CD14-positive monocyte (primary cell): ENCODE measurements at regions of chr22 and their contacts with region 1.

Region 1: GRCh38 chr22:50498322-50498890 is 9.1 kb downstream of the LMF2 start:
- DNase-seq: peak; percentile 34 to 58 (median 53)
- H3K4me3 ChIP-seq: no peak overlapping the region
- H3K4me3 Mint-ChIP-seq: no peak overlapping the region
- H3K27ac ChIP-seq: no peak overlapping the region
- H3K27ac Mint-ChIP-seq: no peak overlapping the region
- H3K4me1 ChIP-seq: no peaks in the 10 kb centered on the region
- H3K4me1 Mint-ChIP-seq: peaks cover 2% of the 10 kb centered on the region
- H3K27me3 ChIP-seq: no peaks in the 10 kb centered on the region
- H3K27me3 Mint-ChIP-seq: peaks cover 6 to 10% (median 10%) of the 10 kb centered on the region in 3 donors
- CTCF ChIP-seq: peak; percentile 66

Region 2: DNA sequence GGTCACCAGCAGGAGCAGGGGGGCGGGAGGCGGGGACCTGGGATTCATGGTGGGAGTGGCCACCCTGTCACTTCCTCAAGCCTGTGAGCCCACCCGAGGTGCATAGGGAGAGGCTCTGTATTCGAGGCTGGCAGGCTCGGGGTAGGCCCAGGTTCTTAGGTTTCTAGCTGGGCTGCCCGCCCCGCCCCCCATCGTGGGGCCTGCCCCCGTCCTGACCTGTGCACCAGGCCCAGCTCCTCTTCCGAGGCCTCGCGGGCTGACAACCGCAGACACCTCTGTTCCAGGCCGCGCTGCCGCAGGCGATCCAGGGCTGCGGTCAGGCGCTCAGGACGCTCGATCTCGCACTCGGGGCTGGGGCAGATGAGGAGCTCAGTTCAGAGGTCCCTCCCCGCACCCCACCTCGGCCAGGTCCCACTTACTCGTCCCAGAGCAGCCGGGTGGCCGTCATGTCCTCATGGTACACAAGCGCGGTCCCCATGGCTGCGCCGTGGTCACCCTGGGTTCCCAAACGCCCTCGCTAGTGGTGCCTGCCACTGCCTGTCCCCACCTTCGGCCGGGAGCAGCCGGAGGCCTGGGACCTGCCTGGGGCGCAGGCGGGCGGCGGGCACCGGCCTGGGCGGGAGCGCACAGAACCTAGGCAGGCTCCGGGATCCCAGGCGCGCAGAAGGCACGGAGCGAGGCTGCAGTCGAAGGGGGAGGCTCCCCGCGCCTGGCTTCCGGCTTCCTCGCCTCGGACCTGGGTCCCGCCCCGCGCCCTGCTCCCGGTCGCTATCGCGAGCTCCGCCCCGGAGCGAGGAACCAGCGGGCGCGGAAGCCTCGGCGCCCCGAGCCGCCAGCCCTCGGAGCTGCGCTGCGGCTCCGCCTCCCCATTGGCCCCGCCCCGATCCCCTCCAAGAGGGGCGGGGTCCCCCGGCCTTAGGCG is 247.6 kb before region 1 on chr22 and contains the start of gene HDAC10:
- intact Hi-C with region 1: loop called (anchors 5 kb)
- DNase-seq: peak; percentile 66 to 78 (median 68)
- H3K4me3 ChIP-seq: peak within 1 kb of the TSS; percentile 72 to 96 (median 92)
- H3K4me3 Mint-ChIP-seq: peak within 1 kb of the TSS; percentile 83 to 92
- H3K27ac ChIP-seq: peak within 1 kb of the TSS; percentile 52 to 76
- H3K27ac Mint-ChIP-seq: peak within 1 kb of the TSS in 5 of 7 donors; percentile 33 to 82 (median 59)
- H3K4me1 ChIP-seq: peaks cover 33 to 47% of the 10 kb centered on the region in 2 donors
- H3K4me1 Mint-ChIP-seq: peaks cover 23% of the 10 kb centered on the region
- H3K27me3 ChIP-seq: no peaks in the 10 kb centered on the region
- H3K27me3 Mint-ChIP-seq: peaks cover 0 to 2% (median 0%) of the 10 kb centered on the region in 3 donors
- CTCF ChIP-seq: no peak
- polyA plus RNA-seq, gene HDAC10: 9.2 to 148 (median 13.7) TPM

Region 3: GRCh38 chr22:50357776-50358175 is 140.6 kb before region 1 on chr22:
- intact Hi-C with region 1: loop called in 1 of 2 experiments (anchors 10 kb)
- DNase-seq: no peak
- H3K4me3 ChIP-seq: no peak overlapping the region
- H3K4me3 Mint-ChIP-seq: no peak overlapping the region
- H3K27ac ChIP-seq: no peak overlapping the region
- H3K27ac Mint-ChIP-seq: no peak overlapping the region
- H3K4me1 ChIP-seq: no peaks in the 10 kb centered on the region
- H3K4me1 Mint-ChIP-seq: peaks cover 4% of the 10 kb centered on the region
- H3K27me3 ChIP-seq: no peaks in the 10 kb centered on the region
- H3K27me3 Mint-ChIP-seq: no peaks in the 10 kb centered on the region
- CTCF ChIP-seq: no peak

Region 4: DNA sequence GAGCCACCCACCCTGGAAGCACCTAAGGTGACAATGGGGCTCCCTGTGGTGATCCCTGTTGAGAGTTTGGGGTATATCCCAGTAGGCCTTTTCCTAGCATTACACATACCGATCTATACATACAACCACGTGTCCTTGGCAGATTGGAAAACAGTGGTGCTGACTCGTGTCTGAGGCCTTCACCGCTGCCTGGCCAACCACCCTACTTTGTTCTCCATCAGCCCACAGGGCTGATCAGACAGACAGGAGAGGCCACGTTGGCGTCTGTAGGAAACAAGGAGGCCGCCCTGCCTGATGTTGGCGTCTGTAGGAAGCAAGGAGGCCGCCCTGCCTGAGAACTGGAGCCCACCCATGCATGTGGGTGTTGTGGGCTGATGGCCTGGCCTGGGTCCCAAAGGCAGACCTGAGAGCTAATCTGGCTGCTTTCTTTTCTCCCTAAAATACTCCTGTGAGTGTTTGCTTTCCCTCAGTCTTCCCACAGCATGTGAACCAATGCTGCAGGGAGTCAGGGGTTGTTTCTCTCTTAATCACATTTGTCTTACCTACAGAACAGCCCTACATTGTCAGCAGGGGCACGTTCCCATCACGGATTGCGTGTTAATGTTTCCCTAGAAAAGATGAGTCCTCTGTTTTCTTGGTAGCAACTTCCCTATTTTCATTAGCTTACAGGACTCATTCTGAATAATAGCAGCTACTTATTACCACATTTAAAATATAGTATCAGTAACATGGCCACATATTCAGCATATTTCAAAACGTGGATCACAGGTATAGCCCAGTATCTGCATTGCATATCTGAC is 80.8 kb before region 1 on chr22:
- intact Hi-C with region 1: no loop called
- DNase-seq: peak in 2 of 3 donors; percentile 3 to 37
- H3K4me3 ChIP-seq: no peak overlapping the region
- H3K4me3 Mint-ChIP-seq: no peak overlapping the region
- H3K27ac ChIP-seq: peak overlapping the region in 1 of 2 donors; percentile 40
- H3K27ac Mint-ChIP-seq: peak overlapping the region in 4 of 7 donors; percentile 2 to 78 (median 58)
- H3K4me1 ChIP-seq: no peaks in the 10 kb centered on the region
- H3K4me1 Mint-ChIP-seq: peaks cover 2% of the 10 kb centered on the region
- H3K27me3 ChIP-seq: no peaks in the 10 kb centered on the region
- H3K27me3 Mint-ChIP-seq: no peaks in the 10 kb centered on the region
- CTCF ChIP-seq: no peak

Region 5: GRCh38 chr22:50582562-50583293 is 84.3 kb after region 1 on chr22 and contains the start of gene CHKB:
- intact Hi-C with region 1: no loop called
- DNase-seq: peak; percentile 96 to 97 (median 96)
- H3K4me3 ChIP-seq: peak within 1 kb of the TSS; percentile 39 to 82 (median 51)
- H3K4me3 Mint-ChIP-seq: peak within 1 kb of the TSS; percentile 82 to 94
- H3K27ac ChIP-seq: peak within 1 kb of the TSS; percentile 83 to 92
- H3K27ac Mint-ChIP-seq: peak within 1 kb of the TSS; percentile 79 to 95 (median 92)
- H3K4me1 ChIP-seq: peaks cover 22 to 40% of the 10 kb centered on the region in 2 donors
- H3K4me1 Mint-ChIP-seq: peaks cover 32% of the 10 kb centered on the region
- H3K27me3 ChIP-seq: peaks cover 0 to 3% of the 10 kb centered on the region in 2 donors
- H3K27me3 Mint-ChIP-seq: peaks cover 6 to 13% (median 10%) of the 10 kb centered on the region in 3 donors
- CTCF ChIP-seq: no peak
- polyA plus RNA-seq, gene CHKB: 29.1 to 286 (median 31.3) TPM